Heart right ventricle (tissue), 16 donors: ENCODE measurements at regions of chr5 and their contacts with region 1.

Region 1: DNA sequence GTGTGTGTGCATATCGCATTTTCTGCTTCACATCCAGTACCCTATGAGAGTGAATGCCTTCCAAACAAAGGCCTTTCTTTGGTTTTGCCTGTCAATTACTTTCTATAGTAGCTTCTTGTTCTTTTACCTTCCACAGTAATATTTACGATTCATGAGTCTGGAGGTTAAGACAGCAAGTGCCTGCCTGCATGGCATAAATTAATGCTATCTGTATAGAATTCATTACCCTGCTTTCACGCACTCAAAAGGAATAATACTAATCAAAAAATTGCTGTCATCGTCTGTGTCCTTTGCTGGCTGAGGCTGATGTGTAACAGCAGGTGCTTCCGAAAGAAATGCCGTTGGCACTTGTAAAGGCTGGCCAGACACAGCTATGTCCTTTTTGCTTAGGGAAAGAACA is 1304.4 kb upstream of the CDH6 start:
- DNase-seq: no peak
- ATAC-seq: no peak
- H3K4me3 ChIP-seq: no peak overlapping the region
- H3K27ac ChIP-seq: no peak overlapping the region
- H3K4me1 ChIP-seq: no peaks in the 10 kb centered on the region
- H3K27me3 ChIP-seq: no peaks in the 10 kb centered on the region
- CTCF ChIP-seq: no peak

Region 2: DNA sequence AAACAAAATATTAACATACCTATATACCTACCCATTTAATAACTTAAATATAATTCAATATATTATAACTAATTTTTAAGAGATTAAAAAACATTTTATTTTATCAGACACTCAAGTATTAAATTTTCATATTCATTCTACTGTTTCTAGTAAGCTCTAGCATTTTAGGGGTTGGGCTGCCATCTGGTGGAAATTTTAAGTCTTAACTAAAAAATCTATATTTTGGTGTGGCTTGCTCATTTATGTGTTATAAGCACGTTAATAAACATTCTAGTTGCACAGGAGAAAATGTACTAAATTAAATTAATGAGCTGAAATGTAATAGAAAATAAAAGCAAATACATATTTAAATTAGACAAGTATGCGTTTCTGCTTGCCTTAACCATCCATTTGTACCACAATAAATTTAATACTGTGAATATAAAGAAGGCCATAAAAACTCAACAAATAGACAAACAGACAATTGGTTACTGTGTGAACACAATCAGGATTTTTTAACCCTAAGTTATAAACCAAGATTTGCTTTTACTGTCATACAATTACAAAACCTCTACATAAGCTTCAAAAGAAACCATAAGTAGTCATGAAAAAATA is 1122.4 kb before region 1 on chr5:
- intact Hi-C with region 1: no loop called
- DNase-seq: no peak
- ATAC-seq: no peak
- H3K4me3 ChIP-seq: no peak overlapping the region
- H3K27ac ChIP-seq: no peak overlapping the region
- H3K4me1 ChIP-seq: no peaks in the 10 kb centered on the region
- H3K27me3 ChIP-seq: no peaks in the 10 kb centered on the region
- CTCF ChIP-seq: peak in 5 of 9 donors; percentile 30 to 46 (median 33)

Region 3: GRCh38 chr5:29697785-29698414 is 191.2 kb before region 1 on chr5:
- intact Hi-C with region 1: no loop called
- DNase-seq: no peak
- ATAC-seq: no peak
- H3K4me3 ChIP-seq: no peak overlapping the region
- H3K27ac ChIP-seq: no peak overlapping the region
- H3K4me1 ChIP-seq: no peaks in the 10 kb centered on the region
- H3K27me3 ChIP-seq: no peaks in the 10 kb centered on the region
- CTCF ChIP-seq: no peak

Region 4: GRCh38 chr5:29930316-29930715 is 41.3 kb after region 1 on chr5:
- intact Hi-C with region 1: loop called in 1 of 10 experiments (anchors 2 kb)
- DNase-seq: no peak
- ATAC-seq: no peak
- H3K4me3 ChIP-seq: no peak overlapping the region
- H3K27ac ChIP-seq: no peak overlapping the region
- H3K4me1 ChIP-seq: no peaks in the 10 kb centered on the region
- H3K27me3 ChIP-seq: no peaks in the 10 kb centered on the region
- CTCF ChIP-seq: no peak